ENCODE measurements at regions of chr5 and their contacts with region 1.

Region 1: DNA sequence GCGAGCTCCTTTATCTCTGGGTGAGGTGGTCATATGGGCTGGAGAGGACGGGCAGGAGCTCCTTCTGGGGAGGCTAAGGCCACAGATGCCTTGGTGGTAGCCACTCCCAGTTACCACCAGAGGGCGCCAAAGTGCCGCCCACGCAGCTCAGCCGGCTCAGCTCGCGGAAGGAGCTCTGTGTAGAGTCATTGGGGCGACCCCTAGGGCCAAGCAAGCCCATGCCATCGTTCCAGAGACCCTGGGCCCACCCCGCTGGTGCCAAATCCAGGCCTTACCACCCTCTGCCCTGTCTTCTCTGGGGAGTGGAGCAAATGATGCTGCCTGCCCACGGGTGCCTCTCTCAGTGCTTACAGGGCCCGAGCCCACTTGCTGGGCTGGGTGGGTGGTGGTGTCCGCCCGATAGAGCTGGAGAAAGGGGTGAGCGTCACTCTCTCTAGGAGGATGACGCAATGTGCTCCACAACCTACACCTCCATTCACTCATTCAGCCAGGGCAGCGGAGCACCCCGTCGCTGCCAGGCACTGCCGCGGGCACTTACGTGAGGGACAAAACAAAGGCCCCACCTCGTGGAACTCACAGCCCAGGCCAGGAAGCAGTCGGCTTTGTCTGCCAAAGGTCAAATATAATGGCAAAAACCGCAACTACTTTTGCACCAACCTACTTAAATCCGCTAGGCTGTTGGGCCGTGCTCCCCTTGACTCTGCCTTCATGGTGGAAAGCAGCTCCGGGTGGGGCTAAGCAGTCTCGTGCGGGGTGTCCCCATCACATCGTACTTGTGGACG is 13.8 kb downstream of the TSPAN17 start:
- DNase-seq: peak; percentile 81
- H3K4me3 Mint-ChIP-seq: no peak overlapping the region
- H3K27ac Mint-ChIP-seq: no peak overlapping the region
- H3K4me1 Mint-ChIP-seq: peaks cover 33% of the 10 kb centered on the region
- H3K27me3 Mint-ChIP-seq: peaks cover 7% of the 10 kb centered on the region

Region 2: GRCh38 chr5:176647030-176647866 is 13.8 kb before region 1 on chr5 and contains the start of gene TSPAN17:
- CTCF ChIA-PET with region 1: interaction called, 76 read pairs
- POLR2A ChIA-PET with region 1: interaction called, 3 read pairs
- DNase-seq: peak; percentile 99
- H3K4me3 Mint-ChIP-seq: peak within 1 kb of the TSS; percentile 73
- H3K27ac Mint-ChIP-seq: peak within 1 kb of the TSS; percentile 88
- H3K4me1 Mint-ChIP-seq: peaks cover 49% of the 10 kb centered on the region
- H3K27me3 Mint-ChIP-seq: no peaks in the 10 kb centered on the region
- total RNA-seq, gene TSPAN17: 39.6 to 42.5 TPM

Region 3: DNA sequence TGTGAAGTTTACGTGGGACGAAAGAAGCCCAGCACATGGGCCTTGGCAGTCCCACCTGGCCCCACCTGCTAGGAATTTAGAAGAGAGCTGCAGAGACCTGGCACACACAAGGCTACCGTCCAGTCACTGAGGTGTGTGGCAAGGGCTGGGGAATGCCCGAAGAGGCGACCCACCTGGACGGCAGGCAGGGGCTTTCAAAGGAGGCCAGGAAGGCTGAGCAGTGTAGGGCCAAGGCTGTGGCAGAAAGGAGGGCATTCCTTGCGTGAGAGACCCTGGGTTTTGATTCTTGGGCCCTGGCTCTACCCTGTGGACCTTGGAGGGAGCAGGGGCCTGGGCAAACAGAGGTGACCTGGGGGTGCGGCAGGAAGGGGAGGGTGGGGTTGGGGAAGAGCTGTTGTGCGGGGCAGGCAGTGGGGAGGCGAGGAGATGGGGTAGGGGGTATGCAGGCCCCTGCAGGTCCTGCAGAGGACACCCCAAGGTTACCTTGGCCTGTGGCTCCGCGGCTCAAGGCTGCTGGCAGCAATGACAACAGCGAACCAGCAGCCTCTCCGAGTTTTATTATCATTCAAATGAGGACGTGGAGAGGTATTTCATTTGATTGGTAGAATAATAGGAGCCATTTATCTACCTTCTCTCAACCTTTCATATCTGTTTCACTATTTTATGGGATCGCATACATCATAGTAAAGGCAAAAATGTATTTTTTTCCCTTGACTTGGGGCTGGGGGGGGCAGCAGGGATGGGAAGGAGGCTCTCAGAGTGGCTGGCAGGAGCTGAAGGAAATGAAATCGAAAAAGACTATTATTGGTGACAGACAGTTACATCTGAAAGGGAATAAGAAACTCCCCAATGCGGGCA is 11.1 kb after region 1 on chr5:
- CTCF ChIA-PET with region 1: interaction called, 25 read pairs
- POLR2A ChIA-PET with region 1: no interaction called
- DNase-seq: no peak
- H3K4me3 Mint-ChIP-seq: no peak overlapping the region
- H3K27ac Mint-ChIP-seq: no peak overlapping the region
- H3K4me1 Mint-ChIP-seq: no peaks in the 10 kb centered on the region
- H3K27me3 Mint-ChIP-seq: peaks cover 7% of the 10 kb centered on the region

Measured in activated CD4-positive, alpha-beta T cell treated with anti-CD3 and anti-CD28 coated beads, Interleukin-2, amount 10 ng/mL, durations not matched to agents 7 days and 5 days (primary cell).